Dendritic cell treated with granulocyte-macrophage colony-stimulating factor and Interleukin-4, amounts not matched to agents 40 ng/mL and 50 ng/mL, for 4 days (primary cell): ENCODE measurements at regions of chr13 and their contacts with region 1.

Region 1: GRCh38 chr13:111161601-111162600 is 46.8 kb downstream of the ARHGEF7 start:
- H3K4me3 Mint-ChIP-seq: no peak overlapping the region
- H3K27ac Mint-ChIP-seq: peak overlapping the region; percentile 54
- H3K4me1 Mint-ChIP-seq: peaks cover 62% of the 10 kb centered on the region
- H3K27me3 Mint-ChIP-seq: no peaks in the 10 kb centered on the region

Region 2: GRCh38 chr13:111202745-111203144 is 40.8 kb after region 1 on chr13:
- intact Hi-C with region 1: loop called (anchors 5 kb)
- H3K4me3 Mint-ChIP-seq: no peak overlapping the region
- H3K27ac Mint-ChIP-seq: peak overlapping the region; percentile 16
- H3K4me1 Mint-ChIP-seq: peaks cover 50% of the 10 kb centered on the region
- H3K27me3 Mint-ChIP-seq: no peaks in the 10 kb centered on the region